ENCODE measurements at regions of chr10 and their contacts with region 1.

Region 1: DNA sequence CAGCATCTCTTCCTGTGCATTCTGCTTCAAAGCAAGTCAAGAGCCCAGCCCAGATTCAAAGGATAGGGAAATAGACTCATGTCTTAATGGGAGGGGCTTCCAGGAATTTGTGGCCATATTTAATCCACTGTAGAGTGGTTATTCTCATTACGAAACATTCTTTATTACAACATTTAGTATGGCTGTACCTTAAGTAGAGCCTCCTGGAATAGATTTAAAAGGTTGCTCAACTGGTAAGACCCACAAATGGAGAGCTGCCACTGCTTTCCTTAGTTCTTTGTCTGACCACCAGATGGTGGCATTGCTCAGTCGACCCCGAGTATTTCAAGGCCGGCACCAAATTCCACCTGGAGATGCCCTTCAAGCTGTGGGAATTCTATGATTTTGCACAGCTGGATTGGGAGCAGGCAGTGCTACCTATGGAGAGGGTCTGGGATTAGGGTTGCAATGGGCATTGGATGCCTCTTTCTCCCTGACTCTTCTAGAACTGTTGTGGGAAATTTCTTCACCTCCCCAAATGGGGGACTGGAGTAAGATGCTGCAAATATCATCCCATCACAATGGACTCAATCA is 102.2 kb downstream of the RBM20 start:
- DNase-seq: peak; percentile 64
- H3K4me3 Mint-ChIP-seq: no peak overlapping the region
- H3K27ac Mint-ChIP-seq: no peak overlapping the region
- H3K4me1 Mint-ChIP-seq: peaks cover 72% of the 10 kb centered on the region
- H3K27me3 Mint-ChIP-seq: no peaks in the 10 kb centered on the region

Region 2: DNA sequence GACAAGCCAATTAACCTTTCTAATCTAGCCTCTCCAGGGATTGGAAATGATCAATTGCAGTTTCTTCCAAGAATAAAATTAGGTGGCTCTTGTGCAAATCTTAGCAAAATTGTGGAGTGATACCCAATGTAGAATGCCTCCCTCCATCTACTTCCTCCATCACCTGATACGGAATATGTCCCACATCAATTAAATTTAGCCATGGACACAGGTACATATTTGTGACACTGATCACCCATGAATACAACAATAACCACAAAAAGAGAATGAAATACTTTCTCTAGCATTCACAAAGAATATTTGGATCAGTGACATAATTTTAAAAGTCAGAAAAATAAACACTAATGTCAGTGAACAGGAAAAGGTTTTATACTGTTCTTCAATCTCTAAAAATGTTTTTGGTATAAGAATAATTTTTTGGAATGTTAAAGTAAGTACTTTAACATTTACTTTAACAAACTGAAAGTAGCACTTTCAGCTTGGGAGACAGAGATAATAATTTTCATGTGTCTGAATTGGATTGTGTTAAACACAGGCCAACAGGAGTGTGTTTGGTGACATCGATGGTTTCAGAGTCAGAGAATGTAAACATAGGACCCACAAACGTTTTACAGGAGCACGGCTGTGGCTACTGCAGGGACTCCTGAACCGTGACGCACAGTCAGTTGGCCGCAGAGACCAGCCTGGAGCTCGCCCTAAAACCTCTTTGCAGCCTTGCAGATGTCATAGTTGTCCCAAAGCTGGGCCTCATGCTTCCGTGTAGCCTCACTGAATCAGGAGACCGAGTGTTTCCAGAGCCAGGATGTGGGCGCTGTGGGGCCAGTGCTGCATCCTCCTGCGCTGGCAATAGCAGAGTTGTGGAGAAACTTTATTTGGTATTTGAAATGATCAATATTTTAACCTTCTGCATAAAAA is 95.0 kb before region 1 on chr10:
- CTCF ChIA-PET with region 1: no interaction called
- intact Hi-C with region 1: no loop called
- DNase-seq: peak; percentile 44
- H3K4me3 Mint-ChIP-seq: no peak overlapping the region
- H3K27ac Mint-ChIP-seq: no peak overlapping the region
- H3K4me1 Mint-ChIP-seq: peaks cover 9% of the 10 kb centered on the region
- H3K27me3 Mint-ChIP-seq: peaks cover 22% of the 10 kb centered on the region

Region 3: GRCh38 chr10:110724116-110724921 is 22.0 kb before region 1 on chr10:
- CTCF ChIA-PET with region 1: interaction called, 3 read pairs
- intact Hi-C with region 1: loop called (anchors 1 kb)
- DNase-seq: peak; percentile 48
- H3K4me3 Mint-ChIP-seq: no peak overlapping the region
- H3K27ac Mint-ChIP-seq: no peak overlapping the region
- H3K4me1 Mint-ChIP-seq: peaks cover 42% of the 10 kb centered on the region
- H3K27me3 Mint-ChIP-seq: no peaks in the 10 kb centered on the region

Region 4: GRCh38 chr10:110864662-110865140 is 118.4 kb after region 1 on chr10:
- CTCF ChIA-PET with region 1: interaction called, 3 read pairs
- intact Hi-C with region 1: loop called (anchors 2 kb)
- DNase-seq: peak; percentile 69
- H3K4me3 Mint-ChIP-seq: peak overlapping the region; percentile 58
- H3K27ac Mint-ChIP-seq: peak overlapping the region; percentile 84
- H3K4me1 Mint-ChIP-seq: peaks cover 96% of the 10 kb centered on the region
- H3K27me3 Mint-ChIP-seq: no peaks in the 10 kb centered on the region

Region 5: GRCh38 chr10:110918643-110919363 is 172.5 kb after region 1 on chr10 and contains the start of gene BBIP1:
- CTCF ChIA-PET with region 1: interaction called, 6 read pairs
- intact Hi-C with region 1: loop called (anchors 1 kb)
- DNase-seq: no peak
- H3K4me3 Mint-ChIP-seq: peak within 1 kb of the TSS; percentile 97
- H3K27ac Mint-ChIP-seq: peak within 1 kb of the TSS; percentile 98
- H3K4me1 Mint-ChIP-seq: peaks cover 32% of the 10 kb centered on the region
- H3K27me3 Mint-ChIP-seq: no peaks in the 10 kb centered on the region
- total RNA-seq, gene BBIP1: 37.2 to 42.6 TPM

Region 6: DNA sequence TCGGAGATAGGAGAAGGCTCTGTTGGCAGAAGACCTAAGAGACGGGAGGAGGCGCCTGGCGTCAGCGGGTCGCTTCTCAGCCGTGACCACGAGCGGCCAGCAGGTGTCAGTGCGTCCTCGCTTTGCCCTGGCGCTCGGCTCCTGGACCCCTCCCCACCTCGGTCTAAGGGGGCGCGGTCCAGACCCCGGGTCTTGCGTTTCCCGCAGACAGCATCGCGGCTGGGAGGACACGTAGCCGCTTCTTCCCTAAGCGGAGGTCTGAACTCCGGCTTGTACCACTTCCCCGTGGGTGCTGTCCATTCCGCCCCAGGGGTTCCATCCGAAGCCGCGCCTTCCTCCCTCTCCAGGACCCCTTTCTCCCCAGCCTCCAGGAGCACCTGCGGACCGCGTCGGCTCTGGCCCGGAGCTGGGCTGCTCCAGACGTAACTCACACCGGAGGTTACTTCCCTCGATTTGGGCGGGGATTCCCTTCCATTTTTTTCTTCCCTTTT is 329.9 kb after region 1 on chr10:
- CTCF ChIA-PET with region 1: interaction called, 10 read pairs
- intact Hi-C with region 1: loop called (anchors 1 kb)
- DNase-seq: peak; percentile 68
- H3K4me3 Mint-ChIP-seq: peak overlapping the region; percentile 71
- H3K27ac Mint-ChIP-seq: no peak overlapping the region
- H3K4me1 Mint-ChIP-seq: peaks cover 11% of the 10 kb centered on the region
- H3K27me3 Mint-ChIP-seq: peaks cover 55% of the 10 kb centered on the region

Region 7: DNA sequence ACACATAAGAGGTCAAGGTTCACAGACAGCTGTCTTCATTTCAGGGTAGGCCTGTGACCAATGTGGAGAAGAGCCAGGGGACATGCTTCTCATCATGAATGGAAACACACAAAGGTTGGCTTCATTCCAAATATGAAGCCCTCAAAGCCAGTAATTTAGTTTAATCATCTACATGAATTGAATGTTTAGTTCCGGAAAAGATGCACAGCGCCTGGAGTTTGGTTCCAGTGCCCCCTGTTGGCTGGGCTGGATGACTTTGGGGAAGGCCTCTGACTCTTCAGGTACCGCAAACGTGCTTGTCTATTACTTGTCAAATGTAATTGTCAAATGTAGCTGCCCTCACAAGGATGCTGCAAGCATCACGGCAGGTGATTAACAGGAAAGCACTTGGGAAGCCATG is 461.2 kb after region 1 on chr10:
- CTCF ChIA-PET with region 1: interaction called, 4 read pairs
- intact Hi-C with region 1: loop called (anchors 1 kb)
- DNase-seq: peak; percentile 65
- H3K4me3 Mint-ChIP-seq: no peak overlapping the region
- H3K27ac Mint-ChIP-seq: no peak overlapping the region
- H3K4me1 Mint-ChIP-seq: no peaks in the 10 kb centered on the region
- H3K27me3 Mint-ChIP-seq: peaks cover 2% of the 10 kb centered on the region

Region 8: DNA sequence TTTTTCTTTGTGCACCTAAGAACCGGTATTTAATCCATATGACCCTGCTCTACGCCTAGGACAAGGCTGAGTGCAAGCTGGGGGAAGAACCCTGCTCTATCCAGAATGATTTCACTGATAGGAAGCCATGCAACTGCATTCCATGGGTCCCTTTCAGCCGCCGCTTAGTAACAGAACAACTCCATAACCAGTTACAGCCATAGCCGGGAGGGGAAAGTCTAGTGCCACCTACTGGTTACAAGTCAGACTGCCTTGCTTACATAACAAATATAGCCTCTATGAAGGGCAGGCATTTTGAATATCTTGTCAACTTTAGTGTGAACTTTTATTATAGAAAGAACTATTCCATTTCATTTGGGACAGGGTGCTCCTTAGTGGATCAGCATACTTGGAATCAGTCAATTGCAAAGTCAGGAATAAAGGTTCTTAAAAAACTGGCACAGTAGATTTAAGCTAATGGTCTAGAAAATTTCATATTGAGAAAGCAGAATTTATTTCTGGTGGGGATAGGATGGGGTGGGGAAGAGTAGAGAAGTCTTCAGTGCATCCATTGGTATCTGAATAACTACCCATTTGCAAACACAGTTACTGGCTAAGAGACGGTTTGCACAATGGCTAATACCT is 852.2 kb after region 1 on chr10:
- CTCF ChIA-PET with region 1: no interaction called
- intact Hi-C with region 1: loop called (anchors 2 kb)
- DNase-seq: peak; percentile 70
- H3K4me3 Mint-ChIP-seq: no peak overlapping the region
- H3K27ac Mint-ChIP-seq: no peak overlapping the region
- H3K4me1 Mint-ChIP-seq: no peaks in the 10 kb centered on the region
- H3K27me3 Mint-ChIP-seq: no peaks in the 10 kb centered on the region

Measured in activated naive CD4-positive, alpha-beta T cell treated with anti-CD3 and anti-CD28 coated beads for 36 hours (primary cell).